Right cardiac atrium (tissue), 5 donors: ENCODE measurements at regions of chr1 and their contacts with region 1.

Region 1: GRCh38 chr1:24830680-24831272 is 85.5 kb downstream of the CLIC4 start:
- DNase-seq: no peak
- ATAC-seq: peak; percentile 80 to 86
- H3K4me3 ChIP-seq: no peak overlapping the region
- H3K27ac ChIP-seq: no peak overlapping the region
- H3K4me1 ChIP-seq: peaks cover 2% of the 10 kb centered on the region
- H3K27me3 ChIP-seq: no peaks in the 10 kb centered on the region

Region 2: DNA sequence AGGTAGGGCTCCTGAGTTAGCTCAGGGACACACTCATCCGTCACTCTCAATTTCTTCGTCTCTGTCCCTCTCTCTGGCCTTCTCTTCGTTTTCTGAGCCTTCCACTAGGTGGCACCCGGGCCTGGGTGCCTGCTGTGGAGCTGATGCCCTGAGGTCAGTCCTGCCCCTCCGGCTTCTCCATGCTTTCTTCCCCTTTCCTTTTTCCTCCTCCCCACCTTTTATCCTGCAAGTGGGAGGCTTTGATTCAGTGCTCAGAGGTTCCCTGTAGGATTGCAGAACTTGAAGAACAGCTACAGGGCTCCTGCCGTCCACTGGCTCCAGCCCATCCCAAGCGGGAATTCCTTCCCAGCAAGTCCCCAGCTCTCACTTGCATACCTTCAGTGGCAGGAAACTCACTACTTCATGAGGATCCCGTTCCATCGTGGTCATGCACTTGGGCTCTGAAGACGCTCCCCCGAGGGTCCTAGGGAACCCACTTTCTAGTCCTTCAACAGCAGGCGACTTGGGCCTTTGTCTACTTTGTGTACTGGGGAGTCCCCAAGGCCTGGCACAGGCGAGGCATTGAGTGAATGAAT is 142.1 kb before region 1 on chr1:
- intact Hi-C with region 1: loop called (anchors 2 to 5 kb)
- DNase-seq: peak; percentile 69 to 89 (median 87)
- ATAC-seq: peak; percentile 84 to 88
- H3K4me3 ChIP-seq: no peak overlapping the region
- H3K27ac ChIP-seq: no peak overlapping the region
- H3K4me1 ChIP-seq: peaks cover 9% of the 10 kb centered on the region
- H3K27me3 ChIP-seq: no peaks in the 10 kb centered on the region

Region 3: DNA sequence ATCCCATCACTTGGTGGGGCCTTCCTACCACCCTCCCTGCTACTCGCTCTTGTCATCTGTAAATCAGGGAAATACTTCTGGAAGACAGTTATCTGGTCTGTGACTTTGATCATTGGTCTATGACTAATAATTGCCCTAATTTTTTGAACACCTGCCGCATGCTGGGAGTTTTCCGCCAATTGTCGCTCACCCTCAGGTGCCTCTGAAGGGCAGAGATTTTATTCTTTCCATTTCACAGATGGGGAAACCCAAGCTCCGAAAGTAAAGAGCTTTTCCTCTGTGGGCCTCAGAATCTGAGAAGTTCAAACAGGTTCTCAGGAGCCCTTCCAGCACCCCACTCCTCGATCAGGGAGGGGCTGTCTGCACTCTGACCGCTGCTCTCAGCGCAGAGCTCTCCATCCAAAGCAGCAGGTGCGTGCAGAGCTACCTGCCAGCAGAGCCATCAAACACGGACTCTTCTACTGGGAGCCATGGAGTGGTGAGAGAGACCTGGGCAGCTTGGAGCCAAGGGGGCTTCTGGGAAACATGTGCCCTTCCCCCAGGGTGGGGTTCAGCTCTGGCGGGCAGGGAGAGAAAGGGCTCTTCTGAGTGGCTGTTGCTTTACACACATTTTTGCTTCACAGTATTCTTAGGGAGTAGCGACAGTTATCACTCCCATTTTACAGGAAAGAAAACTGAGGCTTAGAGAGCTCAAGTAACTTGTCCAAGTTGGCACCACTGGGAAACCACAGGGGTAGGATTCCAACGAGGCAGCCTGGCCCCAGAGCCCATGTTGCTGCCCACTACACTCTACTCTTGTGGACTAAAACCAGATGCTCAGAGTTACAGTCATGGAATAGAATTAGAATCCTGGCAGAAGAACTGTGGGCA is 105.1 kb after region 1 on chr1:
- intact Hi-C with region 1: no loop called
- DNase-seq: no peak
- ATAC-seq: no peak
- H3K4me3 ChIP-seq: no peak overlapping the region
- H3K27ac ChIP-seq: no peak overlapping the region
- H3K4me1 ChIP-seq: no peaks in the 10 kb centered on the region
- H3K27me3 ChIP-seq: no peaks in the 10 kb centered on the region

Region 4: GRCh38 chr1:24970926-24971875 is 140.4 kb after region 1 on chr1:
- intact Hi-C with region 1: no loop called
- DNase-seq: no peak
- ATAC-seq: no peak
- H3K4me3 ChIP-seq: no peak overlapping the region
- H3K27ac ChIP-seq: no peak overlapping the region
- H3K4me1 ChIP-seq: no peaks in the 10 kb centered on the region
- H3K27me3 ChIP-seq: no peaks in the 10 kb centered on the region

Region 5: GRCh38 chr1:25216123-25216522 is 385.3 kb after region 1 on chr1:
- intact Hi-C with region 1: no loop called
- DNase-seq: no peak
- ATAC-seq: no peak
- H3K4me3 ChIP-seq: no peak overlapping the region
- H3K27ac ChIP-seq: no peak overlapping the region
- H3K4me1 ChIP-seq: no peaks in the 10 kb centered on the region
- H3K27me3 ChIP-seq: no peaks in the 10 kb centered on the region